ENCODE measurements at regions of chr10 and their contacts with region 1.

Region 1: DNA sequence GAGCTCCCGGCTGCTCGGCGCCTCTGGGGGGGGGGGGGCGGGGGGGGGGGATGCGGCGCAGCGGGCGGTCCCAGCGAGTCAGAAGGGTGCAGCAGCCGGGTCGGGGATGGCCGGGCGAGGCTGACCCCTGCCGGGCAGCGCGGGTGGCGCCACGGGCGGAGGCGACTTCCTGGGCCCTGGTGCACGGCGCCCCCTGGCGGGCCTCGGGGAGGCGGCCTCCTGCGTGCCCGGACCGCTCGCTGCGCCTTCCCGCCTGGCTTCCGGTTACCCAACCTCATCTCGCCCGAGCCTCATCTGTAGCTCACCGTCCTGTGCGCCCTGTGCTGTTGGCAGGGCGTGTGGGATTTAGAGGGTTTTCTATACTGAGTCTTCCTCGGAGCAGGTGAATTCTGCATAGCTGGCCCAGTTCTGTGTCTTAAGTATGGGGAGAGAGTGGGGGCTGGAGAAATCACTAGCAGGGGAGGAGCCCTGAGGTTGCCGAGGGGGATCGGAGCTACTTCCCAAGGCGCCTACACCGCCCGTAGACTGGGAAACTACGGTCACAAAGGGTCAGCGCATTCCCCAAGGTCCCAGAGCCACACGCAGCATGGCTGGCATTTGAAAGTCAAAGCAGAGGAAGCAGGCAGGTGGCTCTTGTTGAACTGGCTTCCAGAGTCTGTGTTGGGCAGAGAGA is 28.3 kb upstream of the WDFY4 start:
- DNase-seq: peak; percentile 89 to 99
- H3K4me3 ChIP-seq: peak overlapping the region; percentile 55
- H3K4me3 Mint-ChIP-seq: peak overlapping the region; percentile 77
- H3K27ac Mint-ChIP-seq: no peak overlapping the region
- H3K4me1 ChIP-seq: peaks cover 12% of the 10 kb centered on the region
- H3K4me1 Mint-ChIP-seq: peaks cover 5% of the 10 kb centered on the region
- H3K27me3 ChIP-seq: peaks cover 1% of the 10 kb centered on the region; the same call in 1 of the 2 replicates
- H3K27me3 Mint-ChIP-seq: peaks cover 31% of the 10 kb centered on the region
- CTCF ChIP-seq: peak; percentile 96 to 99

Region 2: GRCh38 chr10:48363617-48364355 is 292.6 kb before region 1 on chr10:
- CTCF ChIA-PET with region 1: interaction called, 73 read pairs
- POLR2A ChIA-PET with region 1: interaction called, 4 read pairs
- intact Hi-C with region 1: loop called (anchors 1 kb)
- DNase-seq: peak; percentile 57 to 77
- H3K4me3 ChIP-seq: no peak overlapping the region
- H3K4me3 Mint-ChIP-seq: peak overlapping the region; percentile 27
- H3K27ac Mint-ChIP-seq: peak overlapping the region; percentile 30
- H3K4me1 ChIP-seq: peaks cover 38% of the 10 kb centered on the region
- H3K4me1 Mint-ChIP-seq: peaks cover 26% of the 10 kb centered on the region
- H3K27me3 ChIP-seq: no peaks in the 10 kb centered on the region
- H3K27me3 Mint-ChIP-seq: no peaks in the 10 kb centered on the region
- CTCF ChIP-seq: peak; percentile 86 to 94

Region 3: DNA sequence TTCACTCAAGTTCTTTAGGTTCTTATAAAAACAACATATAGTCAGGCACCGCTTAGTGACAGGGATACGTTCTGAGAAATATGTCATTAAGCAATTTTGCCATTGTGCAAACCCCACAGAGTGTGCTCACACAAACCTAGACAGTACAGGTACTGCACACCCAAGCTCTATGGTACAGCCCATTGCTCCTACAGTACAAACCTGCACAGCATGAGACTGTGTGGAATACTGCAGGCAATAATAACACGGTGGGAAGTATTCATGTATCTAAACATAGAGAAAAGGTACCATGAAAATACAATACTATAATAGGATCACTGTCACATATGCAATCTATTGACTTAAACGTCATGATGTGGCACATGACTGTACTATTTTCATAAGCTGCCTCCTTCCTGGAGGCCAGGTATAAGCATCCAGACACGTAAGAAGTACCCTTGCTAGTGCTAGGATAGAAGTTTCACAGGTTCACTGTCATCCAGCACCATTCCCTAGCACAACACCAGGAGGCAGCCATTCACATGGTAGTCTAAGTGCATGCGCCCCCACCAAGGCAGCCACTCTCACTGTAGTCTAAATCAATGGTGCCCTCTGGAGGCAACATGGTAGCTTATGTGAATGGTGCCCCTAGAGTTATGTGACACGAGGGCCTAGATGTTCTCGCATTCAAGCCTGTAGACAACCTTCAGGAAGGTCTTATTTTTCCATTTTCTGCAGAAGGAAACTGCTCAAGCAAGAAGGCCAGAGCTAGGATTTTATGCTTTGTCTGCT is 150.0 kb before region 1 on chr10:
- CTCF ChIA-PET with region 1: interaction called, 10 read pairs
- POLR2A ChIA-PET with region 1: no interaction called
- intact Hi-C with region 1: no loop called
- DNase-seq: peak; percentile 69 to 74
- H3K4me3 ChIP-seq: no peak overlapping the region
- H3K4me3 Mint-ChIP-seq: no peak overlapping the region
- H3K27ac Mint-ChIP-seq: no peak overlapping the region
- H3K4me1 ChIP-seq: no peaks in the 10 kb centered on the region
- H3K4me1 Mint-ChIP-seq: no peaks in the 10 kb centered on the region
- H3K27me3 ChIP-seq: no peaks in the 10 kb centered on the region
- H3K27me3 Mint-ChIP-seq: no peaks in the 10 kb centered on the region
- CTCF ChIP-seq: peak; percentile 56 to 68

Region 4: DNA sequence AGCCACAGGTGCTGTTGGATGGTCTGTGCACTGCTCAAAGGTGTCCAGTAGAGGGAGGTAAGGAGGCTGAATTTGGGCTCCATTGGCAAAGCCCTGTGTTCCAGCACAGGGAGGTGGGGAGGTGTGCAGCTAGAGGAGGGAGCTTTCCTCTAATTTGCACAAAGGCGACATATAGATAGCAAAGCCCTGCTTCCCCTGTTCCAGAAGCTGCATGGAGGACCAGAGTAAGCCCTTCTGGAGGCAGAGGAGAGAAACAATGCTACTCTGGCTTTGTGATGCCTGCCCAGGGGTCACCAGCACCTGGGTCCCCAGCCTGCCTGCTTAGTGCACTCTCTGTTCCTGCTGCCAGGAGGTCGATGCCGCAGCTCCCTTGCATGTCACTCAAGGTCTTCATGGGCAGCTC is 48.1 kb before region 1 on chr10:
- CTCF ChIA-PET with region 1: interaction called, 32 read pairs
- POLR2A ChIA-PET with region 1: no interaction called
- intact Hi-C with region 1: loop called (anchors 2 kb)
- DNase-seq: peak; percentile 66 to 73
- H3K4me3 ChIP-seq: no peak overlapping the region
- H3K4me3 Mint-ChIP-seq: no peak overlapping the region
- H3K27ac Mint-ChIP-seq: no peak overlapping the region
- H3K4me1 ChIP-seq: 0 out of 2 replicates have a peak, but pooled peaks cover 6% of the 10 kb centered on the region
- H3K4me1 Mint-ChIP-seq: peaks cover 6% of the 10 kb centered on the region
- H3K27me3 ChIP-seq: 0 out of 2 replicates have a peak, but pooled peaks cover 4% of the 10 kb centered on the region
- H3K27me3 Mint-ChIP-seq: peaks cover 17% of the 10 kb centered on the region
- CTCF ChIP-seq: peak; percentile 80 to 93

Region 5: GRCh38 chr10:48701139-48701901 is 44.9 kb after region 1 on chr10:
- CTCF ChIA-PET with region 1: interaction called, 5 read pairs
- POLR2A ChIA-PET with region 1: no interaction called
- intact Hi-C with region 1: loop called (anchors 1 kb)
- DNase-seq: no peak
- H3K4me3 ChIP-seq: no peak overlapping the region
- H3K4me3 Mint-ChIP-seq: no peak overlapping the region
- H3K27ac Mint-ChIP-seq: no peak overlapping the region
- H3K4me1 ChIP-seq: no peaks in the 10 kb centered on the region
- H3K4me1 Mint-ChIP-seq: no peaks in the 10 kb centered on the region
- H3K27me3 ChIP-seq: peaks cover 4% of the 10 kb centered on the region
- H3K27me3 Mint-ChIP-seq: peaks cover 33% of the 10 kb centered on the region
- CTCF ChIP-seq: no peak

Region 6: DNA sequence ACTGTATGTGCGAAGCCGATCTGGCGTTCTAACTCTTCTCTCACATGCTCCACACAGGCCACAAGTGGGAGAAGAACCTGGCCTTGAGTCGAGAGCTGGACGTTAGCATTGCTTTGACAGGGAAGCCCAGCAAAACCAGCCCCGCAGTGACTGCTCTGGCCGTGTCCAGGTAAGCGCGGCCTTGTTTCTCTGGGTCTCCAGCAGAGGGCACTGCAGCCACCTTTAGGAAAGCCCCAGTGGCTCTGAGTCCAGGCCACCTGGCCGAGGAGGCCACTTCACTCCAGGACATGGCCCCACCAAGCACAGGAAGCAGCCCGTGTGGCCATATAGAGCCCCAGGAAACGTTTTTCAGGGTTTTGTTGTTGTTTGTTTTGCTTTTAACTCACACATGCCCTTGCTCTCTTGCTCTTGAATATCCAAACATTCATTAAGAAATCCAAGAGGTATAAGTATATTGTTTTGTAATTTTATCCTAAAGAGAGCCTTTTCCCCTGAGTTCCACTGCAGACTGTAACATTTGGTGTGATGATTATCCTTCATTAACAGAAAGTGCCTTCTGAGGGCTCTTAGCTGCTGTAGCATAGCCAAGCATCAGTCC is 325.0 kb after region 1 on chr10:
- CTCF ChIA-PET with region 1: interaction called, 9 read pairs
- POLR2A ChIA-PET with region 1: no interaction called
- intact Hi-C with region 1: loop called (anchors 5 kb)
- DNase-seq: peak; percentile 75 to 80
- H3K4me3 ChIP-seq: no peak overlapping the region
- H3K4me3 Mint-ChIP-seq: no peak overlapping the region
- H3K27ac Mint-ChIP-seq: no peak overlapping the region
- H3K4me1 ChIP-seq: no peaks in the 10 kb centered on the region
- H3K4me1 Mint-ChIP-seq: no peaks in the 10 kb centered on the region
- H3K27me3 ChIP-seq: no peaks in the 10 kb centered on the region
- H3K27me3 Mint-ChIP-seq: peaks cover 18% of the 10 kb centered on the region
- CTCF ChIP-seq: peak; percentile 87 to 93

Region 7: GRCh38 chr10:49512121-49512809 is 855.9 kb after region 1 on chr10:
- CTCF ChIA-PET with region 1: interaction called, 4 read pairs
- POLR2A ChIA-PET with region 1: no interaction called
- intact Hi-C with region 1: loop called (anchors 2 kb)
- DNase-seq: peak in 1 of 2 experiments; percentile 53
- H3K4me3 ChIP-seq: no peak overlapping the region
- H3K4me3 Mint-ChIP-seq: no peak overlapping the region
- H3K27ac Mint-ChIP-seq: no peak overlapping the region
- H3K4me1 ChIP-seq: no peaks in the 10 kb centered on the region
- H3K4me1 Mint-ChIP-seq: no peaks in the 10 kb centered on the region
- H3K27me3 ChIP-seq: no peaks in the 10 kb centered on the region
- H3K27me3 Mint-ChIP-seq: no peaks in the 10 kb centered on the region
- CTCF ChIP-seq: peak; percentile 81 to 90

Measured in Caco-2 (cell line).